H1 (cell line): ENCODE measurements at regions of chr15 and their contacts with region 1.

Region 1: DNA sequence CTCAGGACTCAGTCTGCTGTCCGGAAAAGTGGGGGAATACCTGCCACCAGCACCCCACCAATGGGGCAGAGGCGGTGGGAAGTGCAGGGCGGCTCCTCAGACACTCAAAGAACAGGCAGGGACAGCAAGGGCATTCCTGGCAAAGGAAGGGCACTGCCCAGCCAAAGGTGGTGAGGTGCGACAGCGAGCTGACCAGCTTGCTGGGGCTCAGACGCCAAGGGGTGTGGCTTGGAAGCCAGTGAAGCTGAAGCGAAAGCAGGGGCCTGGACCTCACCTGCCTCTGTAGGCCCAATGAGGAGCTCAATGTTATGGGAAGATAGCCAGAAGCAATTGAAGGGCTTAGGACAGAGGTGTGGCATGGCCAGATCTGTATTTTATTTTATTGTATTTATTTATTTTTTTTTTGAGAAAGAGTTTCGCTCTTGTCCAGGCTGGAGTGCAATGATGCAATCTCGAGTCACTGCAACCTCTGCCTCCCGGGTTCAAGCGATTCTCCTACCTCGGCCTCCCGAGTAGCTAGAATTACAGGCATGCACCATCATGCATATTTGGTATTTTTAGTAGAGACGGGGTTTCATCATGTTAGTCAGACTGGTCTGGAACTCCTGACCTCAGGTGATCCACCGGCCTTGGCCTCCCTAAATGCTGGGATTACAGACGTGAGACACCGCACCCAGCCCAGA is 4.4 kb upstream of the LMAN1L start:
- DNase-seq: no peak
- H3K4me3 ChIP-seq: no peak overlapping the region
- H3K27ac ChIP-seq: no peak overlapping the region
- H3K4me1 ChIP-seq: peaks cover 0 to 2% (median 1%) of the 10 kb centered on the region in 4 experiments; a peak in 2 of 7 replicates
- H3K27me3 ChIP-seq: no peaks in the 10 kb centered on the region
- CTCF ChIP-seq: no peak
- EP300 ChIP-seq: no peak
- POLR2A ChIP-seq: no peak
- RAD21 ChIP-seq: no peak

Region 2: DNA sequence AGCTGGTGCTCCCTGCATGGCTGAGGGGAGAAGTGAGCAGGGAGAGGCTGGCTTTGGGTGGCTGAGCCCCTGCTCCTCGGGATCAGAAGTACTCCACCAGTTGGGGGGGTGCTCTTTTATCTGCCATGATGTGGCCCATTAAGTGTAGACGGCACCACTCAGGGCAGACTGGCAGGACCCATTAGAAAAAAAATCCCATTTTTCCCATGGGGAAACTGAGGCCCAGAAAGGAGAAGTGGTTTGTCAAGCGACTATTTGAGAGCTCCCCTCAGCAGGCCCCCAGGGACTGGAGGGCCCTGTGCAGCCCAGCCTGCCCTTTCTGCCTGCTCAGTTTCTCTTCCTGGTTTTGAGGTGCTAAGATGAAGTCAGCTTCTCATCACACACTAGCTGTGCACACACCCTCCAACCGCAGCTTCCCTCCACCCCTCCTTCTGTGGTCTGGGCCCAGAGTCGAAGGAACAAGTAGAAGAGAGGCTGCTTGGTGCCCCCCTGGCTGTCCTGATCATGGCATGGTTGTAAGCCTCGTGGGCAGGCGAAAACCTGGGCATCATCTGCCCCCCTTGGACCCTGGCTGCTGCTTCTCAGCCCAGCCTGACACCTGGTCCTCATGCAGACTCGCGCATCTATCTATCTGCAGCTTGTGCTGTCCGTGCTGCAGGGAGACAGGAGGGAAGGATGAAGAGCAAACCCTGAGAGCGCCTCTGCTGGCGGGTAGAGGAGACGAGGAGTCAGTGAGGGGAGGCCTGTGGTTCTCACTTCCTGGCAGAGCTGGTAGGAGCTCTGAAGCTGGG is 20.8 kb before region 1 on chr15:
- CTCF ChIA-PET with region 1: interaction called, 35 read pairs
- POLR2A ChIA-PET with region 1: interaction called, 5 read pairs
- DNase-seq: peak in 1 of 2 experiments; percentile 71
- H3K4me3 ChIP-seq: no peak overlapping the region
- H3K27ac ChIP-seq: no peak overlapping the region
- H3K4me1 ChIP-seq: peaks cover 4 to 34% (median 22%) of the 10 kb centered on the region in 4 experiments
- H3K27me3 ChIP-seq: no peaks in the 10 kb centered on the region
- CTCF ChIP-seq: peak; percentile 79 to 95 (median 88)
- EP300 ChIP-seq: no peak
- POLR2A ChIP-seq: no peak
- RAD21 ChIP-seq: peak; percentile 11 to 47; a peak in 2 of 4 replicates

Region 3: DNA sequence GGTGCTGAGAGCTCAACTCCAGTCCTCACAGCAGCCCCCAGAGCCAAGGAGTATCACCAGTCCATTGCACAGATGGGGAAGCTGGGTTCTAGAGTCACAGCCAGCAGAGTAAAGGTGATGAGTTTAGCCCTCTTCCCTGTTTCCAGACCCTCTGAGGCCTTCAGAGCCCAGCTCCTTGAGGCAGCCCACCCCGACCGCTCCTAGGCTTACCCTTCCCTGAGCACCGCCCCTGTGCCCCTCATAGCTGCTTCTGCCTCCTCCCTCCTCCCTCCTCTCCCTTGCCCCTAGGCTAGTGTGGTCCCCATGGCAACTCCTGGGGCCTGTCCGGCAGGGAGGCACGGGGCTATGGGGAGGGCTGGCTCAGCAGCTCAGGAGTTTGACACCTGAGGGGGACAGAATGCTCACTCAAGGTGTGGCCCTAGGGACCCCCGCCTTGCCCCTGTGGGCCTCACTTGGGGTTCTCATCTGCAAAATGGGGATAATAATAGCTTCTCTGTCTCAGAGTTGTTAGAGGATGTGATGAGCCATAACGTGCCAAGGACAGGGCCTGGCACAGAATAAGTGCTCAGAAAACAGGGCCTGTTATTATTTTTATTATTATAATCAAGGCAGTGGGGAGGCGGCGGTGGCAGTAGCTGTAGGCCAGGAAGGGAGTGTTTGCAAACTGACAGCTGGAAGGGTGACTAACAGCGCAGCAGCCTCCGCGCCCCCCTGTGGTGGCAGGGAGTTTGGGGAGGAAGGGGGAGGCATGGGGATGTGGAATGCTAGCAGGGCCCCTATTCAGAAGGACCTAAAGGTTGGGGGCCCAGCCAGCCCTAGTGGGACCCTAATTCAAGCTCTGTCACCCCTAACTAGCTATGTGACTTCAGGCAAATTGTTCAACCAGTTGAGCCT is 14.8 kb before region 1 on chr15:
- CTCF ChIA-PET with region 1: interaction called, 35 read pairs
- POLR2A ChIA-PET with region 1: interaction called, 6 read pairs
- DNase-seq: no peak
- H3K4me3 ChIP-seq: no peak overlapping the region
- H3K27ac ChIP-seq: no peak overlapping the region
- H3K4me1 ChIP-seq: peaks cover 2 to 19% (median 11%) of the 10 kb centered on the region in 4 experiments
- H3K27me3 ChIP-seq: no peaks in the 10 kb centered on the region
- CTCF ChIP-seq: peak in 2 of 3 experiments; percentile 7 to 16; a peak in 2 of 4 replicates
- EP300 ChIP-seq: no peak
- POLR2A ChIP-seq: no peak
- RAD21 ChIP-seq: no peak

Region 4: GRCh38 chr15:74826364-74826819 is 18.2 kb after region 1 on chr15 and contains the start of gene CPLX3:
- CTCF ChIA-PET with region 1: interaction called, 64 read pairs
- POLR2A ChIA-PET with region 1: interaction called, 7 read pairs
- DNase-seq: peak in 1 of 2 experiments; percentile 84
- H3K4me3 ChIP-seq: peak within 1 kb of the TSS in 2 of 4 experiments; percentile 5 to 41; a peak in 3 of 8 replicates
- H3K27ac ChIP-seq: no peak within 1 kb of the TSS
- H3K4me1 ChIP-seq: peaks cover 0 to 9% (median 4%) of the 10 kb centered on the region in 4 experiments; a peak in 4 of 7 replicates
- H3K27me3 ChIP-seq: peaks cover 4 to 47% (median 29%) of the 10 kb centered on the region in 4 experiments
- CTCF ChIP-seq: no peak
- EP300 ChIP-seq: no peak
- POLR2A ChIP-seq: no peak
- RAD21 ChIP-seq: no peak
- total RNA-seq, gene CPLX3: not detected in 2 replicates

Region 5: DNA sequence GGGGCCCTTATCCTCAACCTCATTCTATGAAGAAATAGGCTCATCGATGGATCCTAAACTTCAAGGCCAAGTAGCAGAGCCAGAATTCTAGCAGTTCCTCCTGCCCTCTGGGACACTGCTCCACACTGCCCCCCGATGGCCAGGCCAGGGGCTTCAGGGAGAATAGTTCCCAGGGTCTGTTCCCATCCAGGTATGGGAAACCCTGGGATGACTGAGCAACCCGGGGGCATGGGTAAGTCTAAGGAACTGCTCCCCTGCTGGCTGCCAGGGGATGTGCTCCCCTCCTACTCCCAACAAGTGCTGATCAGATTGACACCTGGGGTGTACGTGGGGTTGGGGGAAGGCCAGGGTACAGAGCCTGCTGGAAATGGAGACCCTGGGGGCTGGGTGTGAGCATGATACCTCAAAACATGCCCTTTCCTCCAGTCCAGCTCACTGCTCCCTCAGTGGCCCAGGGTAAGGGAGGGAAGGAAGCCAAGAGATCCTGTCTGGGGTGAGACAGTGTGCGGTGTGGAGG is 27.2 kb after region 1 on chr15:
- CTCF ChIA-PET with region 1: interaction called, 47 read pairs
- POLR2A ChIA-PET with region 1: no interaction called
- DNase-seq: peak; percentile 82 to 98
- H3K4me3 ChIP-seq: no peak overlapping the region
- H3K27ac ChIP-seq: peak overlapping the region; percentile 47; the same call in 1 of the 2 replicates
- H3K4me1 ChIP-seq: peaks cover 0 to 4% (median 2%) of the 10 kb centered on the region in 4 experiments; a peak in 4 of 7 replicates
- H3K27me3 ChIP-seq: no peaks in the 10 kb centered on the region; a peak in 1 of 7 replicates
- CTCF ChIP-seq: peak; percentile 73 to 98 (median 97)
- EP300 ChIP-seq: peak in 1 of 2 experiments; percentile 35; a peak in 1 of 3 replicates
- POLR2A ChIP-seq: no peak
- RAD21 ChIP-seq: peak; percentile 62 to 76